CD4-positive, alpha-beta memory T cell (primary cell): ENCODE measurements at regions of chr10 and their contacts with region 1.

Region 1: GRCh38 chr10:11178606-11179515 is 161.2 kb downstream of the CELF2 start:
- DNase-seq: peak; percentile 87 to 98 (median 89)
- H3K4me3 ChIP-seq: peak overlapping the region; percentile 13 to 20
- H3K4me3 Mint-ChIP-seq: peak overlapping the region in 2 of 8 donors; percentile 76 to 80
- H3K27ac ChIP-seq: peak overlapping the region; percentile 96
- H3K27ac Mint-ChIP-seq: peak overlapping the region in 3 of 7 donors; percentile 97 to 100 (median 98)
- H3K4me1 ChIP-seq: peaks cover 100% of the 10 kb centered on the region
- H3K4me1 Mint-ChIP-seq: peaks cover 30 to 90% (median 60%) of the 10 kb centered on the region in 4 donors
- H3K27me3 ChIP-seq: no peaks in the 10 kb centered on the region
- H3K27me3 Mint-ChIP-seq: no peaks in the 10 kb centered on the region

Region 2: GRCh38 chr10:11113156-11113555 is 65.7 kb before region 1 on chr10:
- CTCF ChIA-PET with region 1: interaction called, 15 read pairs
- POLR2A ChIA-PET with region 1: interaction called, 13 read pairs
- intact Hi-C with region 1: loop called (anchors 1 kb)
- DNase-seq: peak; percentile 58 to 69 (median 67)
- H3K4me3 ChIP-seq: no peak overlapping the region
- H3K4me3 Mint-ChIP-seq: peak overlapping the region in 7 of 8 donors; percentile 22 to 77 (median 58)
- H3K27ac ChIP-seq: no peak overlapping the region
- H3K27ac Mint-ChIP-seq: peak overlapping the region; percentile 3 to 90 (median 79)
- H3K4me1 ChIP-seq: peaks cover 13% of the 10 kb centered on the region
- H3K4me1 Mint-ChIP-seq: peaks cover 18 to 33% (median 23%) of the 10 kb centered on the region in 4 donors
- H3K27me3 ChIP-seq: no peaks in the 10 kb centered on the region
- H3K27me3 Mint-ChIP-seq: no peaks in the 10 kb centered on the region

Region 3: DNA sequence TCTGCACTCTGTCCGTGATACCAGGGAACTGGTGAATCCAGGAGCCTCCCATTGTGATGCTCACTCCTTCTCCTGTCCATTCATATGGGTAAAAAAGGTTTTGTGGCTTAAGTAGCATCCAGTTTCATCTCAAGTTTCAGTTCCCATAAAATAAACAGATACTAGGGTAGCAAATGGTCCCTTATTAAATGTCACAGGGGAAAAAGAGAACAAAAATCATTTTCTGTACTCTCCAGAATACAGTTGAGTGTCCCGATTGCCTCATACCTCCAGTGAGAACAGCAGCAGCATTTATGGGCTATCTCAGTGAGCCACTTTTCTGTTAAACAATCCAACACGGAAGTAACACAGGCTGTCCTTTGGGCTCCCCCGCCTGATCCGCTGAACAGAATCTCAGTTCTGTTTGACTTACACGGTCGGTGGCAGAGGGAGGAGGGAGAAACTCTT is 18.4 kb after region 1 on chr10:
- CTCF ChIA-PET with region 1: interaction called, 5 read pairs
- POLR2A ChIA-PET with region 1: interaction called, 18 read pairs
- intact Hi-C with region 1: no loop called
- DNase-seq: no peak
- H3K4me3 ChIP-seq: no peak overlapping the region
- H3K4me3 Mint-ChIP-seq: peak overlapping the region in 7 of 8 donors; percentile 14 to 84 (median 49)
- H3K27ac ChIP-seq: peak overlapping the region; percentile 2
- H3K27ac Mint-ChIP-seq: peak overlapping the region; percentile 30 to 94 (median 75)
- H3K4me1 ChIP-seq: peaks cover 94% of the 10 kb centered on the region
- H3K4me1 Mint-ChIP-seq: peaks cover 82 to 98% (median 90%) of the 10 kb centered on the region in 4 donors
- H3K27me3 ChIP-seq: no peaks in the 10 kb centered on the region
- H3K27me3 Mint-ChIP-seq: no peaks in the 10 kb centered on the region

Region 4: DNA sequence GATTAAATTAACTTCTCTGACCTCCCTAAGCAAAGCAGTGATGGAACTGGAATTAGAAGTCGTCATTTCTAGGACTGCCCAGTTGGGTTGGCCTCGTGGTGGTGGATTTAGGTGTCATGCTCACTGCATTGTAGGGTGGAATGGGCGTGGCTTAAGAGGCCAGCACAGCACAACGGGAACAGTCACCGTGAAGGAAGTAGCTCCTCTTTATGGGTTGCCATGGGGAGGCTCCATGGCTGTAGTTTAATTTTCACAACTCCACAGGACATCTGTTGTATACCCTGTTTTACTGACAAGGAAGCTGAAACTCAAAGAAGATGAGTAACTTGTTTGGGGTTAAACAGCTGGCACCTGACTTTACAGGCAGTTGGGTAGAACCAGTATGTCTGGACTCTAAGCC is 47.1 kb after region 1 on chr10:
- CTCF ChIA-PET with region 1: interaction called, 3 read pairs
- POLR2A ChIA-PET with region 1: interaction called, 119 read pairs
- intact Hi-C with region 1: loop called (anchors 2 kb)
- DNase-seq: peak; percentile 46 to 86 (median 50)
- H3K4me3 ChIP-seq: peak overlapping the region in 1 of 2 donors; percentile 36
- H3K4me3 Mint-ChIP-seq: peak overlapping the region in 7 of 8 donors; percentile 64 to 84 (median 75)
- H3K27ac ChIP-seq: peak overlapping the region; percentile 58
- H3K27ac Mint-ChIP-seq: peak overlapping the region; percentile 90 to 98 (median 94)
- H3K4me1 ChIP-seq: peaks cover 96% of the 10 kb centered on the region
- H3K4me1 Mint-ChIP-seq: peaks cover 81 to 99% (median 93%) of the 10 kb centered on the region in 4 donors
- H3K27me3 ChIP-seq: no peaks in the 10 kb centered on the region
- H3K27me3 Mint-ChIP-seq: no peaks in the 10 kb centered on the region

Region 5: DNA sequence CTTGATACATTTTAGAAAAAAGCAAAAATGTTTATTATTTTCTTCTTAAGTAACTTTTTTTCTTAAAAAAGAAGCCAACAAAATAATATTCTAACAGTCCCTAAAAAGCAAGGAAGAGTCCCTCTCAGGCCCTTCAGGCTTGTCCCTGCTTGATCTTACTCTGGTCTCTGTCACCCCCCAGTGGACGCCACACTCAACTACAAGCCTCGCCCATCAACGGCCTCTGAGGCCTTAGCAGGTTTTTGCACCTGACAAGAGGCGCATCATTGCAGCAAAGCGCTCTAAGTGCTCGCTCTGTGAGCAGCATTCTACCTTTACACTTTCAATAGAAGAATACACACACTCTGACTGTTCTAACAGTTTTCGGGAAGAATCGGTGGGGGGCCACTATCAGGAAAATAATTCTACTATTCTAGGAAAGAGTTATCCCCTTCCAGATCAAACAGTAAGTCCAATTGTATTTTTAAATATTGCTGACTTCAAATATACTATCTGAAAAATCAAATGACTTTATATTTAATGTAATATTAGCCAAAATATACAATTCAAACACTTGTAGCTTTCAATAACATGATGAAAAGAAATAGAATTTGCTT is 293.4 kb after region 1 on chr10:
- CTCF ChIA-PET with region 1: no interaction called
- POLR2A ChIA-PET with region 1: no interaction called
- intact Hi-C with region 1: loop called (anchors 5 kb)
- DNase-seq: peak; percentile 59 to 70 (median 62)
- H3K4me3 ChIP-seq: no peak overlapping the region
- H3K4me3 Mint-ChIP-seq: no peak overlapping the region
- H3K27ac ChIP-seq: no peak overlapping the region
- H3K27ac Mint-ChIP-seq: no peak overlapping the region
- H3K4me1 ChIP-seq: no peaks in the 10 kb centered on the region
- H3K4me1 Mint-ChIP-seq: peaks cover 0 to 2% (median 0%) of the 10 kb centered on the region in 4 donors
- H3K27me3 ChIP-seq: no peaks in the 10 kb centered on the region
- H3K27me3 Mint-ChIP-seq: peaks cover 0 to 2% of the 10 kb centered on the region in 2 donors

Region 6: DNA sequence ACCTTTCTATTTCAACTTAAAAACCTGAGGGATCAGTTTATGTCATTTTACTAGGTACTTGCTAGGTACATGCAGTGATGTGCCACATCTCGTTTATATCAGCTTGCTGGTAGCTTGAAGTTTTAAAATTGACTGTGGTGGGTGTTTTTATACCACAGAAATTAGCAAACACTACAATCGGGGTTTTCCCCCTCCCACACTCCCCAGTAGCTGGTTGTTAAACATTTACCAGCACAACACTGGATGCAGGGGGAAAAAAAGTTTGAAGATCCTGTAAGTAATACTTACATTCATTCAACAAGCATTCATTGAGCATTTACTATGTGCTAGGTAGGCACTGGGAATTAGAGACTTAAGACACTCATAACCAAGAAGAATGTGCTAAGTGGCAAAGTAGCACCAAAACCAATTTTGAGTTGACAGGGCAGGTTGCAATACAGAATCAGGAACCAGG is 400.0 kb after region 1 on chr10:
- CTCF ChIA-PET with region 1: no interaction called
- POLR2A ChIA-PET with region 1: no interaction called
- intact Hi-C with region 1: no loop called
- DNase-seq: no peak
- H3K4me3 ChIP-seq: no peak overlapping the region
- H3K4me3 Mint-ChIP-seq: no peak overlapping the region
- H3K27ac ChIP-seq: no peak overlapping the region
- H3K27ac Mint-ChIP-seq: no peak overlapping the region
- H3K4me1 ChIP-seq: peaks cover 6% of the 10 kb centered on the region
- H3K4me1 Mint-ChIP-seq: peaks cover 7 to 14% (median 12%) of the 10 kb centered on the region in 4 donors
- H3K27me3 ChIP-seq: no peaks in the 10 kb centered on the region
- H3K27me3 Mint-ChIP-seq: peaks cover 1% of the 10 kb centered on the region in 2 donors